ENCODE measurements at regions of chr5 and their contacts with region 1.

Region 1: DNA sequence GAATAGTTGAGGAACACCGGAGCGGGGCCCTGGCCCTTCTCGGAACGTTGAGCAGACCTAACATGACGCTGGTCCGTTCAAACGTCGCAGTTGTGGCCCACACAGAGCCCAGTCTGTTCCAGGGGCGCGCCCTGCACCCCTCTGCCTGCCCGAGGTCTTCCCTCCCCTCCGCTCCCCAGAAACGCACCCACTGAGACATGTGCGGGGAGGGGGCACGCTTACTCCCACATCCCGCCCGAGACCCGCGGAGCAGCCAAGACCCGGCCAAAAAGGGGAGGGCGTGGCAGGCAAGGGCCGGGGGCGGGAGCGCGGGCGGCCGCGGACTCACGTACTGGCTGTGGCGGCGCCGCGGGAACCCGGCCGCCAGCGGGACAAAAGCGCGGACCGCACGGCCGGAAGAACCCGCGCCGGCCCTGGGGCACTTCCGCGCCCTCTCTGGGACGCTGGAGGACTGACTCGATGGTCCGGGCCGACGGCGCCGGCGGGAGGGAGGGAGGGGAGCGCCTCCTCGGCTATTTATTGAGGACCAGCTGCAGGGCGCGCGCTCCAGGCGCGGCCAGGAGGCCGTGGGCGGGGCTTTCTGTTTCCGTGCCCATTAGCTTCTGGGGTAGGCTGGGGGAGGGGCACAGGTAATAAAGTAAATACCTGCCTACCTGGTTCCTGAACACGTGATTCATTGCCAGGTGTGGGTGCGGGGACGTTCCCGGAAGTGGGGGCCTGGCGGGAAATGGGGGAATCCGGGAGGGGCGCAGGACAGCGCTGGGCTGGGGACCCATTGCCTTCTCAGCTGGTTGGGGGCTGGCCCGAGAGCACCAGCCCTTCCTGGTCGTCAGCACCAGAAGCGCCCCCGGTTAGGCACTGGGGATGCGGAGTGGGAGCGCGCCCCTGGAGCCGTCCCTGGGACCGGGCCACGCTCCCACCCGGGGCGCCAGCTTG is at the start of gene ZFP62:
- DNase-seq: peak; percentile 76 to 98 (median 86)

Region 2: DNA sequence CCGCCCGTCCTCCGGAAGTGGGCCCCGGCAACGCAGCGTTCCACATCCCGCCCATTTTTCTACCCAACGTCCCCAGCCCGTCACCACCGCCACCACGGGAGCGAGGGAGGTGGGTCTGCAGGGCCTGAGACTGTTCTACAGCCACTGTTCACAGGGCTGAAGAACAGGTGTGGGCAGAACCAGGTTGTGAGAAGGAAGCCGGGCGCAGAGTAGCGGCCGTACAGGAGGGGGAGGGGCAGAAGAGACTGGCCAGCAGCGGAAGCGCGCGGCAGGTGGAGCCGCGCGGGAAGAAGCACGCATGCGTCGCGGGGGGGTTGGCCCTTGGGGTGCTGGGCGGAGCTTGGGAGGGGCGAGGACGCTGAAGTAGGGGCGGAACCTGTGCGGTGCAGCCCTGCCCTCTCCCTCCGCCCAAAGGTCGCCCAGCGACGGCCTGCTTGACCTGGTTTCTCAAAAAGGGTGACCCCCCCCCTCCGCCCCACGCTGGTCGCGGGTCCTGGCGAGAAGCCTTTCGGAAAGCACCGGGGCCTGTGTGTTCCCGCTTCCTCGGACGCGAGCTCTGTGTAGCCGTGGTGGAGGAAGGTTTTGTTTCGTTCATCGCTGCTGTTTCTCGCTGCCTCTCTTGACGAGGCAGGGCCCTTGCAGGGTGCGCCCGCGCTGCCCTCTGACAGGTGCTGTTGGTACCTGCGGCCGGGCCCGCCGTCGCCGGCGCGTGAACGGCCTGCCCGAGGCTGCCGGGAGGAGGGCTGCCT is 50.8 kb before region 1 on chr5:
- intact Hi-C with region 1: loop called (anchors 5 kb)
- DNase-seq: peak; percentile 93 to 99 (median 95)

Region 3: GRCh38 chr5:181181650-181182565 is 320.8 kb after region 1 on chr5:
- intact Hi-C with region 1: loop called (anchors 10 kb)
- DNase-seq: peak in 2 of 10 donors; percentile 57 to 76

Measured in posterior cingulate gyrus (tissue), 11 donors.